AG04449 (cell line): ENCODE measurements at regions of chr5 and their contacts with region 1.

Region 1: DNA sequence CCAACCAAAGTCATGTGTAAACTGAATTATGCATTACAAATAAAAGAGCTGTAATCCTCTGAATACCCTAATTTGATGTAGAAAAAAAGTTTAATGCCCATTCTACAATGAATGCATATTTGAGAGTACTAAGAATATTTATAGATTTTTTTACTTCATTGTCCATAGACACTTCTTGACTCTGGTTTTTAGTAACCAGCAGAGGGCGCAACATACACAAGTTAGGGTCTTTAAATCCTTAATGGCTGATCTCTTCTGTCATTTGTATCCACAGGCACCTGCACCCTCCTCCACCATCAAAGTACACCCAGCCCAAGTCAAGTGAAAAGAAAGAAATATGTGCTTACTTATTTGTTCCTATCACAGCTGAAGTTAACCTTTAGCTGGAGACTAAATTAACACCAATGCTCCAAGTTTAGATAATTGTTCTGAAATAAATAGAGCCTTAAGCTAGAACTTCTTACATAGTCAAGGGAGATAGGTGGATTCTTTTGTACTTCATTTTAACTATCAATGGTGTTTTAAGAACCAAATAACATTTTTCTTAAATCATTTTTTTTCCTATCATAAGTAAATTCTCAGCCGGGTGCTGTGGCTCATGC is 524.2 kb upstream of the DAB2 start:
- DNase-seq: peak; percentile 19
- H3K4me3 ChIP-seq: no peak overlapping the region
- CTCF ChIP-seq: peak; percentile 46

Region 2: DNA sequence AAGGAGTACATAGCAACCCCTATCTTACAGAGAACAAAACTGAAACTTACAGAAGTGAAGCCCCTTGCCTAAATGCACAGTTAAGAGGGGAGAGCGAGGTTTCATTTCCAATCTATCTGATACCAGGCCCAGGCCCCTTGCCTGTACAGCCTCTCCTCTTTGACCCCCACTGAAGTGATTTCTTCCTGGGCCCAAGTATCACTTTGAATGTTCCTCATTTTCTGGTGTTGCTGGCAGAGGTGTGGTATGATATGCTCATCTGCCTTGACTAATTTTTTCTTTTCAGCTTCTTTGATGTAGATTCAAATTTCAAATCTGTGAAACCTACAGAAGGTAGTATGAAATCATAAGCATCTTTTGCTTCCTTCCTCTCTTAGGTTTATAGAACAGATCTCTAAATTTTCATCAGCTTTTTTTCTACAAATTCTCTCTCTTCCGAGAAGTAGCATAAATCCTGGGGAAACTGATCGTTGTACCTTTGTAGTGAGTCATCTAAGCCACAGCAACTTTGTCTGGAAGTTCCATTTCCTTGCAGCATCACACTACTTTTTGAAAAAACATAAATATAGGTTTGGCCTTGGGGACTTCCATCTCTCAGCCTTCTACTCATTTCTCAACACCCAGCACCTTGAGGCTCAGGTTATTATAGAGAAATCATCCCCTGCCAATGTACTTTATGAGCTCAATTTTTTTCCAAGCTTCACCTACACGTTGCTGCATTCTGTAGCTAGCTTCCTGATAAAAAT is 328.4 kb after region 1 on chr5:
- CTCF ChIA-PET with region 1: no interaction called
- POLR2A ChIA-PET with region 1: no interaction called
- DNase-seq: no peak
- H3K4me3 ChIP-seq: no peak overlapping the region
- CTCF ChIP-seq: no peak

Region 3: DNA sequence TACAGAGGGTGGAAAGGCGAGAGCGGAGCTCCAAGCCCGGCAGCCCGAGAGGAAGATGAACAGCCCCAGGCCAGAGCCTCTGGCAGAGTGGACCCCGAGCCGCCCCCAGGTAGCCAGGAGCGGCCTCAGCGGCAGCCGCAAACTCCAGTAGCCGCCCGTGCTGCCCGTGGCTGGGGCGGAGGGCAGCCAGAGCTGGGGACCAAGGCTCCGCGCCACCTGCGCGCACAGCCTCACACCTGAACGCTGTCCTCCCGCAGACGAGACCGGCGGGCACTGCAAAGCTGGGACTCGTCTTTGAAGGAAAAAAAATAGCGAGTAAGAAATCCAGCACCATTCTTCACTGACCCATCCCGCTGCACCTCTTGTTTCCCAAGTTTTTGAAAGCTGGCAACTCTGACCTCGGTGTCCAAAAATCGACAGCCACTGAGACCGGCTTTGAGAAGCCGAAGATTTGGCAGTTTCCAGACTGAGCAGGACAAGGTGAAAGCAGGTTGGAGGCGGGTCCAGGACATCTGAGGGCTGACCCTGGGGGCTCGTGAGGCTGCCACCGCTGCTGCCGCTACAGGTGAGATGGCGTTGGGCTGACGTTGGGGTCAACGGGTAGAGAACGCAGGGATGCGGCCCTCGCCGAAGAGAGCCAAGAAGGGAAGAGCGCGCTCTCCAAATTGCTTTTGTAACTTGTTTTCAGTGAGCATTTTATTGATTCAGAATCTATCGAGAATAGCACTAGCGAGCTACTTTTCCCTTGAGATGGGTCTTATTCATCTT is 731.1 kb after region 1 on chr5 and contains the start of gene PTGER4:
- CTCF ChIA-PET with region 1: interaction called, 50 read pairs
- POLR2A ChIA-PET with region 1: no interaction called
- DNase-seq: no peak
- H3K4me3 ChIP-seq: peak within 1 kb of the TSS; percentile 75
- CTCF ChIP-seq: no peak

Region 4: GRCh38 chr5:40688127-40688761 is 739.3 kb after region 1 on chr5:
- CTCF ChIA-PET with region 1: interaction called, 50 read pairs
- POLR2A ChIA-PET with region 1: no interaction called
- DNase-seq: no peak
- H3K4me3 ChIP-seq: no peak overlapping the region
- CTCF ChIP-seq: peak; percentile 72